Activated CD4-positive, alpha-beta T cell treated with anti-CD3 and anti-CD28 coated beads, Interleukin-2, amount 10 ng/mL, durations not matched to agents 24 days and 14 days (primary cell): ENCODE measurements at regions of chr10 and their contacts with region 1.

Region 1: GRCh38 chr10:43105102-43105785 is 28.4 kb downstream of the RET start:
- DNase-seq: peak; percentile 95
- H3K4me3 Mint-ChIP-seq: peak overlapping the region; percentile 82
- H3K27ac Mint-ChIP-seq: peak overlapping the region; percentile 65
- H3K4me1 Mint-ChIP-seq: peaks cover 13% of the 10 kb centered on the region
- H3K27me3 Mint-ChIP-seq: peaks cover 20% of the 10 kb centered on the region

Region 2: DNA sequence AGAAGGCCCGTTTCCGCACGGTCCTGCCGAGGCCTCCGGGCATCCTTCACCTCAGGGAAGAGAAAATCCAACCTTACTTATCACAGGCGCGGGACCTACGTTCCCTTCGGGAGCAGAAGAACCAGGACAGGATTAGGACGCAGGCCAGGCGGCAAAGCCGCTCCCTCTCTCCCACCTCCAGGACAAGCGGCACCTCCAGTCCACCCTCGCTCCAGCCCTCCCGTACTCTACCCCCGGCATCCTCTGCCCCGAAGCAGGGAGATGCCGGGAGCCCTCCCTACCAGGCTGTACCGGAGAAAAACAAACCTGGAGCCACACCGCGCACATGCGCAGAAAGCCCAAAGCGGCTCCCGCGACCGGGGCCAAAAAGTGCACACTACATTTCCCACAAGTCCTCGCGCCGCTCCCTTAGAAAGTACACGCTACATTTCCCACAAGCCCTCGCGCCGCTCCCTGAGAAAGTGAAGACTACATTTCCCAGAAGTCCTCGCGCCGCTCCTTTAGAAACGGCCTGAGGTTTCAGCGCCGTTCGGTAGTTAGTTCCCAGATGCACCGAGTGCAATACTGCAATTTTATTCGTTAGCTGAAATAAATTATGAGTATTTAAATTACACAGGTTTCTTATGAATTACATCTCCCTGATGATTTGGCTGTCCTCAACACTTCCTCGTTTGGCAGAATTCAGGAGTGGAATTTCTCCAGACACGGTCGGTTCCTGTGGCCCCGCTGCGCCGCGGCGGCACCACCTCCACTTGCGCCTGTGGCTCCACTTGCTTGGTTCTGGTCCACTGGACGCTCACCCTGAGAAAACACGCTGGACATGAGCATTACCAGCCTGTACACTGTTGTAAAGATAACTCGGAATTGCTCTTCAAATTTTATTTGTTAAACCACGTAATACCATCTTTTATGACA is 552.5 kb before region 1 on chr10:
- intact Hi-C with region 1: loop called (anchors 10 kb)
- DNase-seq: peak; percentile 98
- H3K4me3 Mint-ChIP-seq: peak overlapping the region; percentile 94
- H3K27ac Mint-ChIP-seq: peak overlapping the region; percentile 97
- H3K4me1 Mint-ChIP-seq: peaks cover 27% of the 10 kb centered on the region
- H3K27me3 Mint-ChIP-seq: no peaks in the 10 kb centered on the region

Region 3: DNA sequence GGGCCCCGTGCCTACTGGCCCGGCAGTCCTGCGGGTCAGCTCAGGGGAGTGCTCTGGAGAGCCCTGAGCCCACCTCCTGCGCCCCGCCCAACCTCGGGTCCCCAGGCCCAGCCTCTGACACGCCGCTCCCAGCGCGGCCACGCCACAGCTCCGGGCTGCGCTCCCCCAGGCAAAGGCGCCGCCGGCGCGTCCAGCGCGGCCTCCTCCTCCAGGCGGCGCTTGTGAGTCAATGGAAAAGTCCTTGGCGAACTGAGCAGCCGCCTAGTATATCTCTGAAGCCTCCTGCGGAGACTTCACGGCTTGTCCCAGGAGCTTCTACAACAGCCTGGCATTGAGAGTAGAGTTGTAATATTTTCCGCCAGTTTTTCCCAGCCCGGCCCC is 352.1 kb before region 1 on chr10:
- intact Hi-C with region 1: loop called (anchors 1 kb)
- DNase-seq: peak; percentile 92
- H3K4me3 Mint-ChIP-seq: peak overlapping the region; percentile 81
- H3K27ac Mint-ChIP-seq: no peak overlapping the region
- H3K4me1 Mint-ChIP-seq: peaks cover 2% of the 10 kb centered on the region
- H3K27me3 Mint-ChIP-seq: peaks cover 62% of the 10 kb centered on the region

Region 4: GRCh38 chr10:42866115-42866995 is 238.9 kb before region 1 on chr10:
- intact Hi-C with region 1: loop called (anchors 1 kb)
- DNase-seq: peak; percentile 87
- H3K4me3 Mint-ChIP-seq: peak overlapping the region; percentile 57
- H3K27ac Mint-ChIP-seq: no peak overlapping the region
- H3K4me1 Mint-ChIP-seq: peaks cover 4% of the 10 kb centered on the region
- H3K27me3 Mint-ChIP-seq: peaks cover 40% of the 10 kb centered on the region

Region 5: GRCh38 chr10:43076876-43077420 is 28.3 kb before region 1 on chr10 and contains the start of gene RET:
- intact Hi-C with region 1: loop called (anchors 2 kb)
- DNase-seq: peak; percentile 86
- H3K4me3 Mint-ChIP-seq: peak within 1 kb of the TSS; percentile 74
- H3K27ac Mint-ChIP-seq: no peak within 1 kb of the TSS
- H3K4me1 Mint-ChIP-seq: peaks cover 6% of the 10 kb centered on the region
- H3K27me3 Mint-ChIP-seq: peaks cover 33% of the 10 kb centered on the region
- total RNA-seq, gene RET: 0.12 and 0.62 TPM in 2 replicates

Region 6: DNA sequence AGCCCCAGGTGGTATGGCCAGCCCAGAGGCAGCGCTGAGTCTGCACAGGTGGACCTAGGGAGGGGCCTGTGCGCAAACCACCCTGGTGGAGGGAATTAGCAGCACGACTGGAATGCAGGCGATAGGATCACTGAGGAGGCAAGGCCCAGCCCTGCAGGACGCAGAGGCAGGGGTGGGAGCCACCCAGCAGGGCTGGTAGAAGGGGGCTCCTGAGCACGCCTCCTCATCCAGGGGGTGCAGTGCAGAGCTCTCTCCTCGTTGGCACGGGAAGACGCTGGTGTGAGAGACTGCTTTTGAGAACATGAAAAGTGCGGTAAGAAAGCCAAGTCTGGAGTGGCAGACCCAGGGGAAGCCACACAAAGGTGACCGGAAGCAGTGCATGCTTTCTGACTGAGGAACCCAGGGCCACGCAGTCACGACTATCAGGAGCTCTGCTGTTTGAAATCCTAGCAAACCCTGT is 272.2 kb after region 1 on chr10:
- intact Hi-C with region 1: no loop called
- DNase-seq: no peak
- H3K4me3 Mint-ChIP-seq: no peak overlapping the region
- H3K27ac Mint-ChIP-seq: no peak overlapping the region
- H3K4me1 Mint-ChIP-seq: no peaks in the 10 kb centered on the region
- H3K27me3 Mint-ChIP-seq: peaks cover 2% of the 10 kb centered on the region

Region 7: GRCh38 chr10:43574001-43574892 is 469.0 kb after region 1 on chr10 and contains the start of gene ZNF239:
- intact Hi-C with region 1: no loop called
- DNase-seq: peak; percentile 91
- H3K4me3 Mint-ChIP-seq: peak within 1 kb of the TSS; percentile 80
- H3K27ac Mint-ChIP-seq: peak within 1 kb of the TSS; percentile 82
- H3K4me1 Mint-ChIP-seq: peaks cover 25% of the 10 kb centered on the region
- H3K27me3 Mint-ChIP-seq: no peaks in the 10 kb centered on the region
- total RNA-seq, gene ZNF239: 2.5 TPM in 2 replicates

Region 8: GRCh38 chr10:43913676-43914385 is 808.6 kb after region 1 on chr10:
- intact Hi-C with region 1: no loop called
- DNase-seq: no peak
- H3K4me3 Mint-ChIP-seq: no peak overlapping the region
- H3K27ac Mint-ChIP-seq: no peak overlapping the region
- H3K4me1 Mint-ChIP-seq: no peaks in the 10 kb centered on the region
- H3K27me3 Mint-ChIP-seq: peaks cover 19% of the 10 kb centered on the region